Endothelial cell of umbilical vein (primary cell): ENCODE measurements at regions of chr3 and their contacts with region 1.

Region 1: GRCh38 chr3:98972155-98972554 is 70.7 kb upstream of the DCBLD2 start:
- DNase-seq: peak; percentile 95
- H3K4me3 ChIP-seq: no peak overlapping the region
- H3K27ac ChIP-seq: peak overlapping the region; percentile 100
- H3K4me1 ChIP-seq: peaks cover 63% of the 10 kb centered on the region
- H3K27me3 ChIP-seq: no peaks in the 10 kb centered on the region
- CTCF ChIP-seq: no peak
- POLR2A ChIP-seq: no peak

Region 2: GRCh38 chr3:98022978-98023820 is 949.0 kb before region 1 on chr3:
- CTCF ChIA-PET with region 1: no interaction called
- POLR2A ChIA-PET with region 1: no interaction called
- dilution Hi-C with region 1: no loop called
- intact Hi-C with region 1: no loop called
- DNase-seq: peak; percentile 66
- H3K4me3 ChIP-seq: no peak overlapping the region
- H3K27ac ChIP-seq: no peak overlapping the region
- H3K4me1 ChIP-seq: no peaks in the 10 kb centered on the region
- H3K27me3 ChIP-seq: peaks cover 5 to 8% of the 10 kb centered on the region in 2 experiments
- CTCF ChIP-seq: peak; percentile 80 to 88
- POLR2A ChIP-seq: no peak

Region 3: GRCh38 chr3:98921957-98922356 is 50.2 kb before region 1 on chr3:
- CTCF ChIA-PET with region 1: no interaction called
- POLR2A ChIA-PET with region 1: no interaction called
- dilution Hi-C with region 1: no loop called
- intact Hi-C with region 1: loop called (anchors 2 kb)
- DNase-seq: no peak
- H3K4me3 ChIP-seq: no peak overlapping the region
- H3K27ac ChIP-seq: peak overlapping the region; percentile 19
- H3K4me1 ChIP-seq: peaks cover 14% of the 10 kb centered on the region
- H3K27me3 ChIP-seq: no peaks in the 10 kb centered on the region
- CTCF ChIP-seq: no peak
- POLR2A ChIP-seq: no peak

Region 4: GRCh38 chr3:98986073-98986472 is 13.9 kb after region 1 on chr3:
- CTCF ChIA-PET with region 1: interaction called, 8 read pairs
- POLR2A ChIA-PET with region 1: interaction called, 4 read pairs
- dilution Hi-C with region 1: no loop called
- intact Hi-C with region 1: loop called (anchors 1 kb)
- DNase-seq: peak; percentile 92
- H3K4me3 ChIP-seq: no peak overlapping the region
- H3K27ac ChIP-seq: peak overlapping the region; percentile 82
- H3K4me1 ChIP-seq: peaks cover 25% of the 10 kb centered on the region
- H3K27me3 ChIP-seq: no peaks in the 10 kb centered on the region
- CTCF ChIP-seq: no peak
- POLR2A ChIP-seq: no peak

Region 5: GRCh38 chr3:100047455-100048141 is 1075.4 kb after region 1 on chr3:
- CTCF ChIA-PET with region 1: no interaction called
- POLR2A ChIA-PET with region 1: no interaction called
- dilution Hi-C with region 1: no loop called
- intact Hi-C with region 1: loop called (anchors 5 kb)
- DNase-seq: peak; percentile 58
- H3K4me3 ChIP-seq: no peak overlapping the region
- H3K27ac ChIP-seq: peak overlapping the region; percentile 28
- H3K4me1 ChIP-seq: peaks cover 33% of the 10 kb centered on the region
- H3K27me3 ChIP-seq: no peaks in the 10 kb centered on the region
- CTCF ChIP-seq: no peak
- POLR2A ChIP-seq: no peak